Activated CD4-positive, alpha-beta T cell treated with anti-CD3 and anti-CD28 coated beads, Interleukin-2, amount 10 ng/mL, durations not matched to agents 24 days and 14 days (primary cell): ENCODE measurements at regions of chr14 and their contacts with region 1.

Region 1: GRCh38 chr14:98234208-98234607 is 1037.8 kb downstream of the BCL11B start:
- DNase-seq: peak; percentile 67
- H3K4me3 Mint-ChIP-seq: no peak overlapping the region
- H3K27ac Mint-ChIP-seq: no peak overlapping the region
- H3K4me1 Mint-ChIP-seq: peaks cover 38% of the 10 kb centered on the region
- H3K27me3 Mint-ChIP-seq: no peaks in the 10 kb centered on the region

Region 2: GRCh38 chr14:97380539-97380941 is 853.7 kb before region 1 on chr14:
- intact Hi-C with region 1: loop called (anchors 1 kb)
- DNase-seq: peak; percentile 74
- H3K4me3 Mint-ChIP-seq: peak overlapping the region; percentile 33
- H3K27ac Mint-ChIP-seq: peak overlapping the region; percentile 78
- H3K4me1 Mint-ChIP-seq: peaks cover 43% of the 10 kb centered on the region
- H3K27me3 Mint-ChIP-seq: no peaks in the 10 kb centered on the region

Region 3: DNA sequence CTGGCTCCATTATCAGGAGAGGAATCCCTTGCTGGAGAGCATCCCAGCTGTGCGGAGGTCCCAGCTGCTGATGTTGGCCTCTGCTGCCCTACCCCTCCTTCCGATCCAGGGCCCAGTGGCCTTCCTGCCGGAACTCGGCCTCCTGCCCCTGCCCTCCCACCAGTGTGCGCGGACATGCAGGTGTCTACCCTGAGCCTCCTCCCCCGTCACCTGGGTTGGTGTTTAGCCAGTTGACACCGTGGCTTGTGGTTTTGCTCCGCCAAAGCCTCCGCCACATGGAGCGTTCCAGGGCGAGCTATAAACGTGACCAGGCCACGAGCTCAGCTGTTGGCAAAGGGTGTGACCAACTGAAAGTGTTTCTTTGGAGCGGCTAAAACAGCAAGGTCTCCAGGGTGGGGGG is 66.5 kb before region 1 on chr14:
- intact Hi-C with region 1: loop called (anchors 1 kb)
- DNase-seq: peak; percentile 79
- H3K4me3 Mint-ChIP-seq: peak overlapping the region; percentile 46
- H3K27ac Mint-ChIP-seq: peak overlapping the region; percentile 77
- H3K4me1 Mint-ChIP-seq: peaks cover 54% of the 10 kb centered on the region
- H3K27me3 Mint-ChIP-seq: no peaks in the 10 kb centered on the region

Region 4: GRCh38 chr14:98189062-98189461 is 45.1 kb before region 1 on chr14:
- intact Hi-C with region 1: loop called (anchors 1 kb)
- DNase-seq: peak; percentile 86
- H3K4me3 Mint-ChIP-seq: peak overlapping the region; percentile 76
- H3K27ac Mint-ChIP-seq: peak overlapping the region; percentile 97
- H3K4me1 Mint-ChIP-seq: peaks cover 91% of the 10 kb centered on the region
- H3K27me3 Mint-ChIP-seq: no peaks in the 10 kb centered on the region

Region 5: DNA sequence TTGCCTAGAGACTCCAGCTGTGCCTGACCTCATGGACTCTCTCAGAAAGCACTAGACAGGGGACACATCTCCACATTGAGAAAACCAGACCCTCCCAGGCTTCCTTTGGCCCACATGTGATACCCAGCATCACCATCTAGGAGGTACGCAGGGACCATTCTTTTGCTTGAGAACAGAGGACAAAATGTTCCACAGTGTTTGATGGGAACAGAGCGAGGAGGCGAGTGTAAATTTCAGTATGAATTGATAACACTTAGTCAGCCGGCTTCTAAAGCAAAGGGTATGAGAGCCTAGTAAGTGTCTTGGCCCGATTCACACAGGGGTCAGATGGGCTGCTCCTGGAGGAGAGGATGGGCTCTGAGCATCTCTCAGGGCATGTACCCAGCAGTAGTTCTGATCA is 14.6 kb before region 1 on chr14:
- intact Hi-C with region 1: loop called (anchors 1 kb)
- DNase-seq: no peak
- H3K4me3 Mint-ChIP-seq: peak overlapping the region; percentile 6
- H3K27ac Mint-ChIP-seq: peak overlapping the region; percentile 68
- H3K4me1 Mint-ChIP-seq: peaks cover 23% of the 10 kb centered on the region
- H3K27me3 Mint-ChIP-seq: peaks cover 2% of the 10 kb centered on the region

Region 6: GRCh38 chr14:98270201-98270600 is 36.0 kb after region 1 on chr14:
- intact Hi-C with region 1: no loop called
- DNase-seq: no peak
- H3K4me3 Mint-ChIP-seq: no peak overlapping the region
- H3K27ac Mint-ChIP-seq: no peak overlapping the region
- H3K4me1 Mint-ChIP-seq: peaks cover 2% of the 10 kb centered on the region
- H3K27me3 Mint-ChIP-seq: no peaks in the 10 kb centered on the region

Region 7: GRCh38 chr14:99186956-99187690 is 952.9 kb after region 1 on chr14:
- intact Hi-C with region 1: loop called (anchors 1 kb)
- DNase-seq: no peak
- H3K4me3 Mint-ChIP-seq: peak overlapping the region; percentile 80
- H3K27ac Mint-ChIP-seq: peak overlapping the region; percentile 93
- H3K4me1 Mint-ChIP-seq: peaks cover 91% of the 10 kb centered on the region
- H3K27me3 Mint-ChIP-seq: no peaks in the 10 kb centered on the region